ENCODE measurements at regions of chr10 and their contacts with region 1.

Region 1: GRCh38 chr10:3852147-3852904 is 67.3 kb upstream of the KLF6 start:
- DNase-seq: peak; percentile 84 to 85
- ATAC-seq: peak; percentile 92
- H3K4me3 ChIP-seq: no peak overlapping the region
- H3K27ac ChIP-seq: peak overlapping the region; percentile 20 to 73
- H3K4me1 ChIP-seq: peaks cover 0 to 5% of the 10 kb centered on the region in 2 donors
- H3K27me3 ChIP-seq: no peaks in the 10 kb centered on the region

Region 2: DNA sequence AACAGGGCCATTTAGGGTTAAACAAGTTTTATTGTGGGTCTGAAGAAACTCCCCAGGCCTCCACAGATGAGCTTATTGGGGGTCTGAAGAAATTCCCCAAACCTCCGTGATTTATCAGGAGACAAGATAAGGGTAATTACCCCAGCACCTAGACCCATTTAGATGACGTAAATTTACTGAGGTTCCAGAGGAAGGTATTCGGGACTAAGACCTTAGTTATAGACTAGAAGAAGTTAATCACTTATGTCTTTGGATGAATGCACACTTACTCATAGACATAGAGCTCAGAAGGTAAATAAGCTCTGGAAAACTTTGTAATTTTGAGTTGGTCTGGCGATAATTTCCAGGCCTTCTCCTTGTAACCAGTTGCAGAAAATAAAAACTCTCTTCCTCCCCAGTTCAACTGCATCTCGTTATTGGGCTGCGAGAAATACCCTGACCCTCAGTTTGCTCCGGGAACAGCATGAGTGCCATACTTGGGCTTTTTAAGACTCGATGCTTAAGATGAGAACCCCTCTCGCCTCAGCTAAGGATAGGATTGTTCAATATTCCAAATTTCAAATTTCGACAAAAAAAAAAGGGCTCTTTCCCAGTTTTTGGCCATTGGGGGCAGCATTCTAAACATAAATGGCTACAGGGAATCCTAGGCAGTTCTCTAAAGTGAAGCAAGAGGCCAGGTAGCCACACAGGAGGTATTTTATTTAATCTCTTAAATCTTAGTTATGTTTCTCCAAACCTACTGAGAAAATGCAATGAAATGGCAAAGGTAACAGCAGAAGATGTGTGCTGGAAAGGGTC is 859.7 kb before region 1 on chr10:
- intact Hi-C with region 1: no loop called
- DNase-seq: no peak
- ATAC-seq: no peak
- H3K4me3 ChIP-seq: no peak overlapping the region
- H3K27ac ChIP-seq: no peak overlapping the region
- H3K4me1 ChIP-seq: no peaks in the 10 kb centered on the region
- H3K27me3 ChIP-seq: peaks cover 0 to 3% of the 10 kb centered on the region in 2 donors

Region 3: GRCh38 chr10:3025300-3025699 is 827.0 kb before region 1 on chr10:
- intact Hi-C with region 1: no loop called
- DNase-seq: no peak
- ATAC-seq: no peak
- H3K4me3 ChIP-seq: no peak overlapping the region
- H3K27ac ChIP-seq: no peak overlapping the region
- H3K4me1 ChIP-seq: no peaks in the 10 kb centered on the region
- H3K27me3 ChIP-seq: no peaks in the 10 kb centered on the region

Region 4: DNA sequence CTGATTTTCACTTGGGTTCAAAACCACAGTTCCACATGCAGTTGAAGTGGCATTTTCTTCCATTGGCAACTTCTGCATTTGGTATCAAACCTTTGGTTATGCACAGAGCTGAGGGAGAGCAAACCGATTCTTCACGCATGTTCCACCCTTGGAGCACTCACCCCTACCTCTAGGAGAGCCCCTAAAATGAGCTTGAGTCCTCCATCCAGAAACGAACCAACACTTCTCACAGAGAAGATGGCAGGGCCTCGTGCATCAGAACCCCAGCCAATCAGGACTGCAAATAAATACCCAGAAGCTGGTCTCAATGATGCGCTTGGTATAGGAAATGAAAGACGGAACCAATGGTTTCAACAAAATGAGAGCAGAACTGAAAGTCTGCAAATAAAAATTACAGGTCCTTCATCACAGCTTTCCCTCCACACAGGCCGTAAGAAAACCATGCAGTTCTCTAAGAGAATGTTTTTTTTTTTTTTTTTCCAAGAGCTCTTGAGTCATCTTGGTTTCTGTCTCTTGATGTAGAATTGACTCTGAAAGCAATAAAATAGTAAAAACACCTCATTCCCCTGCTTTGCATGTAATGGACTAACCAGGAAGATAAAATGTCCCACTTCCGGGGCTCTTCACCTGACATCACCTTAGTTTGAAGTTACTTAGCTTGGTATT is 91.2 kb before region 1 on chr10:
- intact Hi-C with region 1: no loop called
- DNase-seq: no peak
- ATAC-seq: no peak
- H3K4me3 ChIP-seq: no peak overlapping the region
- H3K27ac ChIP-seq: no peak overlapping the region
- H3K4me1 ChIP-seq: no peaks in the 10 kb centered on the region
- H3K27me3 ChIP-seq: no peaks in the 10 kb centered on the region

Region 5: DNA sequence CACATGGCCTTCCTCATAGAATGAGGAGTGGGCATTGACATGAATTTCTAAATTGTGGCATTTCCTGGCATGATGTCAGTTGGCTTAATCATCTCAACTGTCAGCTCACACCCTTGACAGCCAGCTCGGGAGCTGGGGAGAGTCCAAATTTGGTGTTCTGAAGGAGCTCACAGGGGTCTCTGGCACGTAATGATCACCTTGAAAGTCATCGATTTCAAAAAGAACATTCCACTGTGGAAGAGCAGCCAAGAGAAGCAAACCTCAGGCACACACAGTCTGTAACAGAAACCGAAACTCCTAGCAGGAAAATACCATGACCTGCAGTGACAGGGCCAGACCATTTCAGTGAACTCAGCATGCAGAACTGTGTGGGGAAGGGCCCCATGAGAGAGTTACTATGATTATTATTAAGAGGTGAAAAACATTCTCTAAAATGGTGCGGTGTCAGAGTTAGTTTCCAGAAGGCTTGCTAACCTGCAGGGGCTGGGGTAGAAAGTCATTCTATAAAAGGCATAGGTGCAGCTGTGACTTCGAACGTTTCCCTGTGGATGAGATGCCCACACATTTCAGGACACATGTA is 40.9 kb before region 1 on chr10:
- intact Hi-C with region 1: loop called in 1 of 2 experiments (anchors 5 kb)
- DNase-seq: no peak
- ATAC-seq: peak; percentile 60
- H3K4me3 ChIP-seq: no peak overlapping the region
- H3K27ac ChIP-seq: peak overlapping the region; percentile 83 to 88
- H3K4me1 ChIP-seq: peaks cover 0 to 4% of the 10 kb centered on the region in 2 donors
- H3K27me3 ChIP-seq: no peaks in the 10 kb centered on the region